Activated CD4-positive, alpha-beta memory T cell treated with anti-CD3 and anti-CD28 coated beads, Interleukin-2, amount 10 ng/mL, durations not matched to agents 7 days and 5 days (primary cell): ENCODE measurements at regions of chr10 and their contacts with region 1.

Region 1: GRCh38 chr10:62816331-62817120 is at the start of gene EGR2:
- DNase-seq: peak; percentile 94
- H3K4me3 Mint-ChIP-seq: peak within 1 kb of the TSS; percentile 87
- H3K27ac Mint-ChIP-seq: peak within 1 kb of the TSS; percentile 95
- H3K4me1 Mint-ChIP-seq: peaks cover 47% of the 10 kb centered on the region
- H3K27me3 Mint-ChIP-seq: peaks cover 68% of the 10 kb centered on the region
- total RNA-seq, gene EGR2: 4.8 to 6.4 TPM

Region 2: DNA sequence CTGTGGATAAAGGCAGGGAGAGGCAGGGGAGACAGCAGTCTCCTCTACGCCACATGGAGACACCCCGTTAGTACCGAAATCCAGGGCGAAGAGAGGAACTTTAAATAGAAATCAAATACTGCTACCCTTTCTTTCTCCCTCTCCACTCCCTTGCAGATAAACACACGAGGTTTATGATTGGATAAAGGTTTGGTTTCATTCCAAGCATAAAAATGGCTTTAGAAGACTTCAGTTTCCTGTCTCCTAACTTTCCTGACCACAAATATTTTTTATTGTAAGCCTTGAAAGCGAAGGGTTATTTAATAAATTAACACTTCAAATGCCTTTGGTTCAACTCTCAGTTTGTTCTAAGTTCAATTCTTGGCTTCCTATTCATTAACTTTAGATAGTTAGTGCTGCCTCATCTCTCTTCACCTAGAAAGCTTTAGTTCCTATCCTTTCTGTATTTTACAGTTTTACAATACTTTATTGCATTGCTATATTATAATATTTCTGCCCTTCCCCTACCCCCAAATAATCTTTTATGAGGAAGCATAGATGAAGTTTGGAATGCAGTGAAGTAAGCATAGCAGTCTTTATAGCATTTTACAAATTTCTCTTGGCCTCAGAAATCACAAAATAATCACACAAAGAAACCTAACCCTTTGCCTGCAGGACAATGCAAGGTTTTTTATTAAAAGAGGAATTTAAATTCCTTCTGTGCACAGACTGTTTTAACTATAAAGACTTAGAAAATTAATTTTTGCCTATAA is 946.6 kb before region 1 on chr10:
- CTCF ChIA-PET with region 1: no interaction called
- POLR2A ChIA-PET with region 1: no interaction called
- DNase-seq: no peak
- H3K4me3 Mint-ChIP-seq: no peak overlapping the region
- H3K27ac Mint-ChIP-seq: no peak overlapping the region
- H3K4me1 Mint-ChIP-seq: peaks cover 13% of the 10 kb centered on the region
- H3K27me3 Mint-ChIP-seq: peaks cover 6% of the 10 kb centered on the region

Region 3: GRCh38 chr10:62594093-62594520 is 222.4 kb before region 1 on chr10:
- CTCF ChIA-PET with region 1: interaction called, 31 read pairs
- POLR2A ChIA-PET with region 1: no interaction called
- DNase-seq: peak; percentile 57
- H3K4me3 Mint-ChIP-seq: no peak overlapping the region
- H3K27ac Mint-ChIP-seq: no peak overlapping the region
- H3K4me1 Mint-ChIP-seq: no peaks in the 10 kb centered on the region
- H3K27me3 Mint-ChIP-seq: peaks cover 12% of the 10 kb centered on the region

Region 4: DNA sequence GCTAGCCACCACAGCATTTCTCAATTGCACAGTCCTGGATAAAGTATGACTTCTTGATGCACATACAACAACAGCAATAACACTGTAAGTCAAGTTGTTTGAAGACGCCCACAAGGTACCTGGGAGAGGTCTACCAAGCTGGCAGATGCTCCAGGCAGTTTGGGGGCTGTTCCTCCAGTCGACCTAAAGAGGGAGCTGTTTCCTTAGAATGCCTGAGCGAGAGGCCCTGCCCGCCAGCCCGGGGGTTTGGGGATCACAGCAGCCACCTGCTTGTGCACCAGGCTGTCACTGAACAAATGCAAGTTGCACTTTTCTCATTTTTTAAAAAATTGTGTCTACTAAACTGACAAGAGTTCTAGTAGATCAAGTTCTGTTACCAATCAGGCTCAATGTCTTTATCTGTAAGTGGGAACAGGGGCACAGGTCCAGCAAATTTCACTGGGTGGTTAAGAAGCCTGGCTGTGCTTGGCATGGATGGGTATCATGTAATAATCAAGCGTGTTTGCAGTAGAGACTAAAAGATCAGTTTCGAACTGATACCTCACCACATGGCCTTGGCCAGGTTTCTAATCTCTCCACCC is 205.8 kb before region 1 on chr10:
- CTCF ChIA-PET with region 1: interaction called, 77 read pairs
- POLR2A ChIA-PET with region 1: interaction called, 8 read pairs
- DNase-seq: peak; percentile 73
- H3K4me3 Mint-ChIP-seq: no peak overlapping the region
- H3K27ac Mint-ChIP-seq: no peak overlapping the region
- H3K4me1 Mint-ChIP-seq: peaks cover 21% of the 10 kb centered on the region
- H3K27me3 Mint-ChIP-seq: peaks cover 16% of the 10 kb centered on the region

Region 5: GRCh38 chr10:62637249-62638061 is 179.1 kb before region 1 on chr10:
- CTCF ChIA-PET with region 1: interaction called, 19 read pairs
- POLR2A ChIA-PET with region 1: interaction called, 29 read pairs
- DNase-seq: peak; percentile 77
- H3K4me3 Mint-ChIP-seq: no peak overlapping the region
- H3K27ac Mint-ChIP-seq: no peak overlapping the region
- H3K4me1 Mint-ChIP-seq: peaks cover 14% of the 10 kb centered on the region
- H3K27me3 Mint-ChIP-seq: no peaks in the 10 kb centered on the region

Region 6: GRCh38 chr10:62696798-62697197 is 119.7 kb before region 1 on chr10:
- CTCF ChIA-PET with region 1: no interaction called
- POLR2A ChIA-PET with region 1: no interaction called
- DNase-seq: no peak
- H3K4me3 Mint-ChIP-seq: no peak overlapping the region
- H3K27ac Mint-ChIP-seq: no peak overlapping the region
- H3K4me1 Mint-ChIP-seq: peaks cover 5% of the 10 kb centered on the region
- H3K27me3 Mint-ChIP-seq: no peaks in the 10 kb centered on the region

Region 7: DNA sequence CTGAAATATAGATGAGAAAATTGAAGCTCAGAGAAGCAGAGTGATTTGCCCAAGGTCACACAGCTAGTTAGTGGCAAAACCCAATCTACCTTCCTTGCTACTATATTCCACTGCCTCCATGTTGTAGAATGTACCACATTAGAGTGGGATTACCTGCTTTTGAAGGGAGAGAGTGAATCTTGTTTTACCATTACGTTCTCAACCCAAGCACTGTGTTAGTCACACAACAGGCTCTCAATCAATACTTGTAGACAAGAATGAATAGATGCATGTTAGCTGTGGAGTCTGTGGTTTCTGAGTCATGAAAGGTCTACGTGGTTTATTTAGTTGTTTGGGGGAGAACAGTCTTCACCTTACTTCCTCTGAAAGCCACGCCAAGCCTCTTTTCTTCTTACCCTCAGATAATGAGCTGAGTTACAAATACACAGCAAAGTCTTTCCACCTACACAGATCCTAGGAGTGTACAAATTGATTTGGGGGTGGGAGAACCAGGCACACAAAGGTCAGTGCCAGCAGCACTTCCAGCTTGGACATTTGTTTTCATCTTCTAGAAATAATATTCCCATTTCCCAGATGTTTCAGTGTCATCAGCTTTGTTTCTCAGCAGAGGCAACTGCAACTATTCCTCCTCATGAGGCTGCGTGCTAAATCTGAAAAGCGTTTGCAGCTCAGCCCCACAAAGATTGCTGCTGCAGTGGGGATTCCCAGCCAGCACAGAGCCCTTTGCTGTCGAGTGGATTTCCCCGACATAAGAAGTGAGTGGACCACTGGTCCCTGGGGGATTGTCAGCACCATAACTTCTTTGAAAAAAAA is 83.5 kb before region 1 on chr10:
- CTCF ChIA-PET with region 1: interaction called, 22 read pairs
- POLR2A ChIA-PET with region 1: interaction called, 32 read pairs
- DNase-seq: peak; percentile 54
- H3K4me3 Mint-ChIP-seq: peak overlapping the region; percentile 47
- H3K27ac Mint-ChIP-seq: no peak overlapping the region
- H3K4me1 Mint-ChIP-seq: peaks cover 15% of the 10 kb centered on the region
- H3K27me3 Mint-ChIP-seq: peaks cover 24% of the 10 kb centered on the region

Region 8: DNA sequence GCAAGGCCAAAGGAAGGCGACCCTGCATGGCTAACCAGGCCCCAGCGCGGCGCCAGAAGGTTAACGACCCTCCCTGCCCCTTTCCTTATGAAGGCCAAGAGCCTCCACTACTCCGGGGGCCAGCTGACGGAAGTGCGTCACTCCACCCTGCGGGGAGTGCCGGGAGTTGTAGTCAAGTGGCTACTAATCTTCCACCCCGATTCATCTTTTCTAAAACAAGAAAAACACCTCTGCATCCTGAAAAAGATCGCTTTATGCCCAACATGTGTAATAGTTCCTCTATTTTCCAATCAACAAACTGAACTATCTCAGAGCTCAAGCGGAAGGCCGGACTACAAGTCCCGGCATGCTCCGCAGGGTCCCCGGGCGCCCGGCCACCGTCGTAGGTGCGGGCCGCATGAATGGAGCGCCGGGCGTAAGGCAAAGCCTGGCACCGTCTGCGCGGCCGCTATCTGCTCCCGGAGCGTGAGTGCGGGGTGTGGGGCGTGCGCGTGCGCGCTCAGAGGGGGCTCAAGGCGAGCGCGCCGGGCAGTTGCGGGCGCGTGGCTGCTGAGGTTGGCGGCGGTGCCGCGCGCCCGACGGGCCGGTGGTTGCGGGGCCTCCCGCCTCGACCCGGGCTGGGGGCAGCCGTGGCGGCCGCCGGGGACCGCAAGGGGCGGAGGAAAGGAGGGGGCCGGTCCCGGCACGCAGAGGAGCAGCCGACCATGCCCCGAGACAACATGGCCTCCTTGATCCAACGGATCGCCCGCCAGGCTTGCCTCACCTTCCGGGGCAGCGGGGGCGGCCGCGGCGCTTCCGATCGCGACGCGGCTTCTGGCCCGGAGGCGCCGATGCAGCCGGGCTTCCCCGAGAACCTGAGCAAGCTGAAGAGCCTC is 11.9 kb before region 1 on chr10 and contains the start of gene ADO:
- CTCF ChIA-PET with region 1: interaction called, 44 read pairs
- POLR2A ChIA-PET with region 1: interaction called, 88 read pairs
- DNase-seq: peak; percentile 76
- H3K4me3 Mint-ChIP-seq: peak within 1 kb of the TSS; percentile 88
- H3K27ac Mint-ChIP-seq: peak within 1 kb of the TSS; percentile 96
- H3K4me1 Mint-ChIP-seq: peaks cover 32% of the 10 kb centered on the region
- H3K27me3 Mint-ChIP-seq: peaks cover 10% of the 10 kb centered on the region
- total RNA-seq, gene ADO: 21.8 to 22.2 TPM

Region 9: GRCh38 chr10:63133056-63133820 is 316.7 kb after region 1 on chr10 and contains the start of gene NRBF2:
- CTCF ChIA-PET with region 1: interaction called, 3 read pairs
- POLR2A ChIA-PET with region 1: interaction called, 25 read pairs
- DNase-seq: peak; percentile 98
- H3K4me3 Mint-ChIP-seq: peak within 1 kb of the TSS; percentile 91
- H3K27ac Mint-ChIP-seq: peak within 1 kb of the TSS; percentile 95
- H3K4me1 Mint-ChIP-seq: peaks cover 35% of the 10 kb centered on the region
- H3K27me3 Mint-ChIP-seq: no peaks in the 10 kb centered on the region
- total RNA-seq, gene NRBF2: 25.1 to 26.8 TPM